SK-N-SH (cell line): ENCODE measurements at regions of chr7 and their contacts with region 1.

Region 1: GRCh38 chr7:45111298-45112223 is at the start of gene TBRG4:
- DNase-seq: peak; percentile 96
- H3K4me3 ChIP-seq: peak within 1 kb of the TSS; percentile 69 to 97
- H3K27ac ChIP-seq: peak within 1 kb of the TSS; percentile 96 to 98
- H3K4me1 ChIP-seq: peaks cover 12 to 25% of the 10 kb centered on the region in 2 experiments; a peak in 2 of 4 replicates
- H3K27me3 ChIP-seq: peaks cover 11% of the 10 kb centered on the region; the same call in 1 of the 2 replicates
- CTCF ChIP-seq: peak; percentile 63
- EP300 ChIP-seq: no peak; a peak in 1 of 4 replicates
- RAD21 ChIP-seq: peak; percentile 63
- polyA plus RNA-seq, gene TBRG4: 76.2 and 89.4 TPM in 2 replicates

Region 2: GRCh38 chr7:44885394-44886317 is 225.9 kb before region 1 on chr7 and contains the start of gene PURB:
- CTCF ChIA-PET with region 1: interaction called, 11 read pairs
- POLR2A ChIA-PET with region 1: no interaction called
- DNase-seq: peak; percentile 99
- H3K4me3 ChIP-seq: peak within 1 kb of the TSS; percentile 78 to 87
- H3K27ac ChIP-seq: peak within 1 kb of the TSS; percentile 90 to 97
- H3K4me1 ChIP-seq: peaks cover 23 to 41% of the 10 kb centered on the region in 2 experiments; a peak in 3 of 4 replicates
- H3K27me3 ChIP-seq: no peaks in the 10 kb centered on the region
- CTCF ChIP-seq: no peak
- EP300 ChIP-seq: peak in 1 of 2 experiments; percentile 75; a peak in 1 of 4 replicates
- RAD21 ChIP-seq: no peak
- polyA plus RNA-seq, gene PURB: 4.1 and 4.8 TPM in 2 replicates

Region 3: DNA sequence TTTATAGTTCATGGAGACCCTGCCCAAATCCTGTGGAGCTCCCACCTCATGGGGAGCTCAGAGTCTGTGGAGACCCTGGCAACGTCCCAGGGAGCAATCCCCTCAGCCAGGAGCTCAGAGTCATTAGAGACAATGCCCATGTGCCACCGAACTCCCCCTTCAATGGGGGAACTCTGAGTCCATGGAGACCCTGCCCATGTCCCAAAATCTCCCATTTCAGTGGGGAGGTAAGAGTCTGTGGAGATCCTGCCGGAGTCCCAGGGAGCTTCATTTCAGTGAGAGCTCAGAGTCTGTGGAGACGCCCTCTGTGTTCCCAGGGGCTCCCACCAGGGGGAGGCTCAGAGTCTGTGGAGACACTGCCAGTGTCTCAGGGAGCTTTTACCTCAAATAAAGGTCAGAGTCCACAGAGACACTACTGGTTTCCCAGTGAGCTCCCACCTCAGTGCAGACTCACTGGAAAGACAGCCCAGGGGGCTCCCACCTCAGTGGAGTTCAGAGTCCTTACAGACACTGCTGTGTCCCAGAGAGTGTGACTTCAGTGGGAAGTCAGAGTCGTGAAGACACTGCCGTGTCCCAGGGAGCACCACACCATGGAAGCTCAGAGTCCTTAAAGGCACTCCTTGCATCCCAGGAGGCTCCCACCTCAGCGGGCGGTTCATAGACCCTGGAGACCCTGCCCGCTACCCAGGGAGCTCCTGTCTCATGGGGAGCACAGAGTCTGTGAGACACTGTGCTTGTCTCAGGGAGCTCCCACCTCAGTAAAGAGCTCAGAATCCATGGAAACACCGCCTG is 137.8 kb before region 1 on chr7:
- CTCF ChIA-PET with region 1: interaction called, 17 read pairs
- POLR2A ChIA-PET with region 1: interaction called, 16 read pairs
- DNase-seq: peak; percentile 75
- H3K4me3 ChIP-seq: no peak overlapping the region
- H3K27ac ChIP-seq: no peak overlapping the region
- H3K4me1 ChIP-seq: peaks cover 0 to 3% of the 10 kb centered on the region in 2 experiments; a peak in 1 of 4 replicates
- H3K27me3 ChIP-seq: no peaks in the 10 kb centered on the region
- CTCF ChIP-seq: peak; percentile 61
- EP300 ChIP-seq: no peak
- RAD21 ChIP-seq: peak; percentile 59

Region 4: DNA sequence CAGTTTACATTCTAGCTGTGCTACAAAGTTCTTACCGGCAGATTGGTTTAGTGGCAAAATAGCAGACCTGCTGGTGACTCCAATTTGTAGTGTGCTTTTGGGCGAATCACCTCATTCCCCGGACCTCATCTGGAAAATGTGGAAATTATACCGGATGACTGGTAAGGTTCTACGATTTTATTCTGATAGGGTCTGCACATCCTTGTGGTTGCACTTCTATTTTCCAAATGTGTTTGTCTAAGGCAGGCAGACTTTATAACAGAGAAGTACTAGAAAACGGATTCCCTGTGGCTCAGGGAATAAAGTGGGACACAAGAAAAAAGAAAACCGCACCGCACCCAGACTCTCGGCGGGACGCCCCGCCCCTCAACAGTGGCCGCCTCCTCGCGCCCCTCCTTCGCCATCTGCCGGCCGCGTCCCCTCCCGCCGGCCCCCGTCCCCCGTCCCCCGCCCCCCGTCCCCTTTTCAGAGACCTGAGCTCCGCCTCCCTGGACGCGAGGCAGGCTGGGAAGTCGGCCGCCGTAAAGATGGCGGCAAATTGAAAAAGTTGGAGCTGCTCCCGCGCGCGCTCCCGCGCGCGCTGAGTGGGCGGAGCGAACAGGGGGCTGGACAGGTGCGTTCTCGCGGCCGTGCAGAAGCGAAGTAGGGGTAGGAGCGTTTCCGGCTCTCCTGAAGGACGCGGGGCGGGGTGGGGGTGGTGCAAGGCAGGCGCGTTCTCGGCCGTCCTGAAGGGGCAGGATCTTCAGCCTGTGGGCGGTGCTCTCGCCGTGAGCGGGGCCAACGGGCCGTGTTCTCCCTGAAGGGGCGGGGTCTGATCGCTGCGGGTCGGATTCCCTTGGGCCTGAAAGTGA is 112.1 kb before region 1 on chr7:
- CTCF ChIA-PET with region 1: interaction called, 12 read pairs
- POLR2A ChIA-PET with region 1: interaction called, 15 read pairs
- DNase-seq: peak; percentile 99
- H3K4me3 ChIP-seq: peak overlapping the region; percentile 48 to 77
- H3K27ac ChIP-seq: peak overlapping the region; percentile 80 to 86
- H3K4me1 ChIP-seq: peaks cover 0 to 10% of the 10 kb centered on the region in 2 experiments; a peak in 3 of 4 replicates
- H3K27me3 ChIP-seq: no peaks in the 10 kb centered on the region
- CTCF ChIP-seq: no peak
- EP300 ChIP-seq: 0 out of 4 replicates have a peak, but pooled peaks of 1 of the 2 experiments have one; percentile 11
- RAD21 ChIP-seq: no peak

Region 5: DNA sequence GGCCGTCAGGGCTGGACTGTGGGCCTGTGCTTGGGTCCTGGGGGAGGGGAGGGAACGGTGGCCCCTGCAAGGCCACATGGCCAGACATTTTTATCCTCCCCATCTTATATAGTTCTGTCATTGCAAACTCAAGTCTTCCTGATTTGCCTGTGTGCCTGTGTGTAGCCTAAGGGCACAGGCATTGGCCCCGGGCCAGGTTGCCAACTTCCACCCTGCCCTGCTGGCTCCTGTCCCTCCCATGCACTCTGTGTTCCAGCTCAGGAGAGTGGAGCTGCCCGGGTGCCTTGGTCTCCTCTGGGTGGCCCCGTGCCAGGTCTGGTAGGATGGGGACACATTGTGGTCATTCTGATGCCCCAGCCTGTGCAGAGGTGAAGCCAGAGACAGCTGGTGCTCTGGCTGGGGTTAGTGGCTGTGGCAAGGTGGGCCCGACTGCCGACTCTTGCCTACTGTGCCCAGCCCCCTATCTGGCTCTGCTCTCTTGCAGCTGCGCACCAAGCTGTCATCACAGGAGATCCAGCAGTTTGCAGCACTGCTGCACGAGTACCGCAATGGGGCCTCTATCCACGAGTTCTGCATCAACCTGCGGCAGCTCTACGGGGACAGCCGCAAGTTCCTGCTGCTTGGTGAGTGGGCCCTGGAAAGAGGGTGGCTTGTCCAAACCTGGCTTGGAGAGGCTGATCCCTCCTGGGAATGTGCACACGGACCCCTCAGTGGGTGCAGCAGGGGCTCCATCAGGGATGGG is 37.6 kb before region 1 on chr7:
- CTCF ChIA-PET with region 1: interaction called, 10 read pairs
- POLR2A ChIA-PET with region 1: interaction called, 23 read pairs
- DNase-seq: peak; percentile 96
- H3K4me3 ChIP-seq: no peak overlapping the region
- H3K27ac ChIP-seq: peak overlapping the region in 1 of 2 experiments; percentile 91; a peak in 2 of 4 replicates
- H3K4me1 ChIP-seq: peaks cover 0 to 40% of the 10 kb centered on the region in 2 experiments; a peak in 1 of 4 replicates
- H3K27me3 ChIP-seq: no peaks in the 10 kb centered on the region
- CTCF ChIP-seq: no peak
- EP300 ChIP-seq: peak in 1 of 2 experiments; percentile 79; a peak in 2 of 4 replicates
- RAD21 ChIP-seq: peak; percentile 36

Region 6: GRCh38 chr7:45089341-45089891 is 22.1 kb before region 1 on chr7:
- CTCF ChIA-PET with region 1: interaction called, 6 read pairs
- POLR2A ChIA-PET with region 1: interaction called, 16 read pairs
- DNase-seq: peak; percentile 98
- H3K4me3 ChIP-seq: peak overlapping the region; percentile 70 to 98
- H3K27ac ChIP-seq: peak overlapping the region in 1 of 2 experiments; percentile 97; a peak in 2 of 4 replicates
- H3K4me1 ChIP-seq: peaks cover 0 to 26% of the 10 kb centered on the region in 2 experiments; a peak in 1 of 4 replicates
- H3K27me3 ChIP-seq: no peaks in the 10 kb centered on the region
- CTCF ChIP-seq: no peak
- EP300 ChIP-seq: no peak; a peak in 1 of 4 replicates
- RAD21 ChIP-seq: no peak; the same call in 1 of the 2 replicates

Region 7: DNA sequence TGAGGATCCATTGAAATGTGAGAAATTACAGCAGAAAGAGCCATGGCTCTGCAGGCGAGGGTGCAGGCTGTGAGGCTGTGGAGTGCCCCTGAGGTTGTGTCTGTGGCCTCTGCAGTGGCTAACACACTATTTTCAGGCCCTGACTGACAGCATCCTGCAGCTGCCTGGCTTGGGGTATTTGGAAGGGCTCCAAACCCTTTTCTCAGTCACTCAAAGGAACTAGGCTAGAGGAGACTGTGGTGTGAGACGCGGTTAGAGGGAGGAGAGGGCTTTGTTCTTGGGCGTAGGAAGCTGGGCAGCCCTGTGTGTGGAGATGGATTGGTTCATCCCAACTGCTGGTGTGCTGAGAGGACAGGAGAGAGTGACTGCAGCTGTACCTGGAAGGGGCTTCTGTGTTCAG is 180.9 kb after region 1 on chr7:
- CTCF ChIA-PET with region 1: no interaction called
- POLR2A ChIA-PET with region 1: no interaction called
- DNase-seq: peak; percentile 30
- H3K4me3 ChIP-seq: no peak overlapping the region
- H3K27ac ChIP-seq: peak overlapping the region in 1 of 2 experiments; percentile 85; a peak in 2 of 4 replicates
- H3K4me1 ChIP-seq: peaks cover 0 to 44% of the 10 kb centered on the region in 2 experiments; a peak in 1 of 4 replicates
- H3K27me3 ChIP-seq: no peaks in the 10 kb centered on the region
- CTCF ChIP-seq: no peak
- EP300 ChIP-seq: no peak
- RAD21 ChIP-seq: no peak